ENCODE measurements at regions of chr3 and their contacts with region 1.

Region 1: GRCh38 chr3:70064194-70064779 is 64.8 kb downstream of the SAMMSON start:
- DNase-seq: peak; percentile 44
- H3K4me3 Mint-ChIP-seq: no peak overlapping the region
- H3K27ac Mint-ChIP-seq: no peak overlapping the region
- H3K4me1 Mint-ChIP-seq: no peaks in the 10 kb centered on the region
- H3K27me3 Mint-ChIP-seq: peaks cover 47% of the 10 kb centered on the region
- CTCF ChIP-seq: peak; percentile 61

Region 2: GRCh38 chr3:70053293-70053692 is 11.0 kb before region 1 on chr3:
- CTCF ChIA-PET with region 1: interaction called, 16 read pairs
- POLR2A ChIA-PET with region 1: no interaction called
- intact Hi-C with region 1: no loop called
- DNase-seq: peak; percentile 33
- H3K4me3 Mint-ChIP-seq: no peak overlapping the region
- H3K27ac Mint-ChIP-seq: no peak overlapping the region
- H3K4me1 Mint-ChIP-seq: no peaks in the 10 kb centered on the region
- H3K27me3 Mint-ChIP-seq: peaks cover 73% of the 10 kb centered on the region
- CTCF ChIP-seq: no peak

Region 3: DNA sequence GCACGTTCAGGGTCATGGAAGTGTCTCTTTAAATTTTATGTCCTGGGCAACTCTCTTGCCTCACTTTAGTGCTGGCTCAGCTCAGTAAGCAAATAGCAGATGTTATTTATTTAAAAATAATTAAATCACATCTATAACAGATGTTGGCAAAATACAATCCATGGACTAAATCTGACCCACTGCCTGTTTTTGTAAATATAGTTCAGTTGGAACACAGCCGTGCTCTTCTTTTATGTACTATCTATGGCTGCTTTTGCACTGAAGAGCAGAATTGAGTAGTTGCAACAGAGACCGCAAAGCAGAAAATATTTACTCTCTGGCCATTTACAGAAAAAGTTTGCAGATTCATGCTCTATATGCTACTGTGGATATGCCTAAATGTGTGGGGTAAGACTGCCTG is 14.5 kb after region 1 on chr3:
- CTCF ChIA-PET with region 1: interaction called, 12 read pairs
- POLR2A ChIA-PET with region 1: no interaction called
- intact Hi-C with region 1: no loop called
- DNase-seq: no peak
- H3K4me3 Mint-ChIP-seq: no peak overlapping the region
- H3K27ac Mint-ChIP-seq: no peak overlapping the region
- H3K4me1 Mint-ChIP-seq: no peaks in the 10 kb centered on the region
- H3K27me3 Mint-ChIP-seq: peaks cover 100% of the 10 kb centered on the region
- CTCF ChIP-seq: no peak

Region 4: DNA sequence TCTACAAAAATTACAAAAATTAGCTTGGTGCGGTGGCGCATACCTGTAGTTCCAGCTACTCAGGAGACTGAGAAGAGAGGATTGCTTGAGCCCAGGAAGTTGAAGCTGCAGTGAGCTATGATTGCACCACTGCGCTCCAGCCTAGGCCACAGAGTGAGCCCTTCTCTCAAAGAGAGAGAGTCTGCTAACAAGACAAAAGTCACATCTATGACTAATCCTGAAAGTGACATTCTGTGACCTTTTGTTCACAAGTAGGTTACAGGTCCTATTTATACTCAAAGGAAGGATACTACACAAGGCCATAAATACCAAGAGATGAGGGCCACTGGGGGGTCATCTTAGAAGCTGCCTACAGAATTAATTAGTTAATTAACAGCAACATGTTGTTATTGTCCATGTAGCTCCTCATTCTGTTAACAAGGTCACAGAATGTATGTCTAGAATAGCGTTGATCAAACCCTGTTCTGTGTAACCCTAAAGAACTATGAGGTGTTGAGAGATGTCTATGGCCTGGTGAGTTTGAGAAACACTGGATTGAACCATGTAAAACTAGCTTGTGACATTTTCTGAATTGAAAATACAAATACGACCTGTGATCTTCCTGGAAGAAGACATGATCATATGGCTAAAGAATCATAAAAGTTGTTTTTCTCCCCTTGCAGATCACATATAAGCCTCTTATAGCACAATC is 32.2 kb after region 1 on chr3:
- CTCF ChIA-PET with region 1: no interaction called
- POLR2A ChIA-PET with region 1: no interaction called
- intact Hi-C with region 1: no loop called
- DNase-seq: no peak
- H3K4me3 Mint-ChIP-seq: no peak overlapping the region
- H3K27ac Mint-ChIP-seq: no peak overlapping the region
- H3K4me1 Mint-ChIP-seq: no peaks in the 10 kb centered on the region
- H3K27me3 Mint-ChIP-seq: peaks cover 50% of the 10 kb centered on the region
- CTCF ChIP-seq: no peak

Region 5: DNA sequence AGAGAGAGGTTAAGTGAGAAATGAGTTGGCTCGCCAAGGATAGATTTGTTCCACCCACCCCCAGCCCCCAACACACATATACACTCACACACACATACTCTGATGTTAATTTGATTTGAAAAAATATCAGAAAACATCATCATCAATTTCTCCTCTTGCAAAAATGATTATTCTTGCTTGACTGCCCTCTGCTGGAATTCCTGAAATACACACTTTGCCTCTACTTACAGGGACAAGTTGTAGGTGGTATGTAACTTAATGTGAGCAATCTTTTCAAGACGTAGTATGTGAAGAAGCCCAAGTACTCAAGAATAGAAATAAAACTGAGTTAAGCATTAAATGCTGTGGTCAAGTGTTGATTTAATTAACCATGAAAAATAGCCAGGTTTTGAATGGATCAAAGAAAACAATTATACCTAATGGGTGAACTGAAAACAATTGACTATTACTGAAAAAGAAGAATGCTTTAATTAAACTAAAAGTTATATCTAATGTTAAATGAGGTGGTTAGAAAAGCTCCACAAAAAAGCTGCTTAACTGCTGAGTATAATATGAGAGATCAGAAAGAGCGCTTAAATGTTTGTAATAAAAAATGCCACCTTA is 294.8 kb after region 1 on chr3:
- CTCF ChIA-PET with region 1: interaction called, 25 read pairs
- POLR2A ChIA-PET with region 1: interaction called, 4 read pairs
- intact Hi-C with region 1: loop called (anchors 1 kb)
- DNase-seq: peak; percentile 37
- H3K4me3 Mint-ChIP-seq: no peak overlapping the region
- H3K27ac Mint-ChIP-seq: no peak overlapping the region
- H3K4me1 Mint-ChIP-seq: no peaks in the 10 kb centered on the region
- H3K27me3 Mint-ChIP-seq: peaks cover 74% of the 10 kb centered on the region
- CTCF ChIP-seq: peak; percentile 60

Region 6: DNA sequence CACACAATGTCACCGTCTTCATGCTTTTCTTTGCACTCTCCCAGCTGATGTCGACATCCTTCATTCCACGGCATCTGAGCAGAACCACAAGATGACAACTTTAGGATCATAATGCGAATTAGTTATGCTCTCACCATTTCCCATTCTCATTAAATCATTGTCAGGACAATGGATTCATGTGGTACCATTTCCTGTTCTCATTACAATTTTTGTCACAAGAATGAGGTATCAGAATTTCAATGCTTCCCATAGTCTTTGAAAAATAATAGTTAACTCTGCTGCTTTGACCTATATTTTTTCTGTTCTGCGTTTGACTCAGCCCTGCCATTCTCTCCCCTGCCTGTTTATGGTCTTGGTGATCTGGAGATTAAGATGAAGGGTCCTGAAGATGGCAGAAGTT is 423.8 kb after region 1 on chr3:
- CTCF ChIA-PET with region 1: no interaction called
- POLR2A ChIA-PET with region 1: no interaction called
- intact Hi-C with region 1: loop called (anchors 10 kb)
- DNase-seq: no peak
- H3K4me3 Mint-ChIP-seq: no peak overlapping the region
- H3K27ac Mint-ChIP-seq: no peak overlapping the region
- H3K4me1 Mint-ChIP-seq: no peaks in the 10 kb centered on the region
- H3K27me3 Mint-ChIP-seq: peaks cover 93% of the 10 kb centered on the region
- CTCF ChIP-seq: no peak